ENCODE measurements at regions of chr13 and their contacts with region 1.

Region 1: GRCh38 chr13:93859716-93860115 is 619.8 kb downstream of the DCT start:
- DNase-seq: no peak
- H3K4me3 ChIP-seq: no peak overlapping the region
- CTCF ChIP-seq: no peak

Region 2: GRCh38 chr13:93814658-93815057 is 45.1 kb before region 1 on chr13:
- in situ Hi-C with region 1: no loop called
- DNase-seq: no peak
- H3K4me3 ChIP-seq: no peak overlapping the region
- CTCF ChIP-seq: no peak

Region 3: DNA sequence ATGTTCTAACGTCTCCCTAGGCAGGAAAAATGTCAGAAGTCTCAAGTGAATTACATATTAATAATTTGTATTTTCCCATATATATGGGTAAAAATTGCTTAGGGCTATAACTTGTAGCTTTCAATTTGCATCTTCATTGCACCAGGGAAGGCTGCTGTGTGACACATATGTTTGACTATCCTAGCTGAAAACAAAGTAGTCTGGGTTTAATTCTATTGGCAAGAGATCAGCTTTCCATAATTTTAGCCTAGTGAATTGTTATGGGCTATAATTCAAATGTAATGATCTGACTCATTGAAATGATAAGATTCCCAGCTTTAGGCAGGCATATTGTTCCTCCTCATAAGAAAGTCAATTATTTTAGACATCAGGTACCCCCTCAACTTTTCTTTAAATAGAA is 66.7 kb after region 1 on chr13:
- in situ Hi-C with region 1: loop called (anchors 5 kb)
- DNase-seq: no peak
- H3K4me3 ChIP-seq: no peak overlapping the region
- CTCF ChIP-seq: no peak

Measured in astrocyte of the cerebellum (primary cell).